Mammary epithelial cell (primary cell): ENCODE measurements at regions of chr7 and their contacts with region 1.

Region 1: DNA sequence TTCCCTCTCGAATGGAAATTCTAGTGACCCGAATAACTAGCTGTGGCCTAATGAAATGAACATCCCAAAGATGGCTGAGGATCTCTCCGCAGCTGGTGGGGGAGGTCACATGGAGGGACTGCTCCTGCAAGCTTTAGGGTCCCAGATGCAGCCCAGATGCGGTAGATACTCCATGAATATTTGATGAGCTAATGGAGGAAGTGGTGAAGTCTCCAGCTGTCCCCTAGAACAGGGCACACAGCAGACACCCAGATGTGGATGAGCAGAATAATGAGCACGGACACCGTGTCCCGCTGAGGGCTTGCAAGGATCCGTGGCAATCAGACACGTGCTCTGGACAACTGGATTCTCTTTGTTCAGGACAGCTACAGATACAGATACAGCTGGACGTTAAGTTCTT is 59.2 kb downstream of the DENND2A start:
- DNase-seq: no peak
- H3K4me3 ChIP-seq: no peak overlapping the region
- H3K27ac ChIP-seq: no peak overlapping the region
- H3K4me1 ChIP-seq: no peaks in the 10 kb centered on the region
- H3K27me3 ChIP-seq: peaks cover 3% of the 10 kb centered on the region
- CTCF ChIP-seq: no peak

Region 2: GRCh38 chr7:140551355-140552239 is 29.8 kb before region 1 on chr7:
- CTCF ChIA-PET with region 1: no interaction called
- dilution Hi-C with region 1: no loop called
- in situ Hi-C with region 1: no loop called
- intact Hi-C with region 1: no loop called
- DNase-seq: no peak
- H3K4me3 ChIP-seq: no peak overlapping the region
- H3K27ac ChIP-seq: no peak overlapping the region
- H3K4me1 ChIP-seq: no peaks in the 10 kb centered on the region
- H3K27me3 ChIP-seq: no peaks in the 10 kb centered on the region
- CTCF ChIP-seq: no peak

Region 3: DNA sequence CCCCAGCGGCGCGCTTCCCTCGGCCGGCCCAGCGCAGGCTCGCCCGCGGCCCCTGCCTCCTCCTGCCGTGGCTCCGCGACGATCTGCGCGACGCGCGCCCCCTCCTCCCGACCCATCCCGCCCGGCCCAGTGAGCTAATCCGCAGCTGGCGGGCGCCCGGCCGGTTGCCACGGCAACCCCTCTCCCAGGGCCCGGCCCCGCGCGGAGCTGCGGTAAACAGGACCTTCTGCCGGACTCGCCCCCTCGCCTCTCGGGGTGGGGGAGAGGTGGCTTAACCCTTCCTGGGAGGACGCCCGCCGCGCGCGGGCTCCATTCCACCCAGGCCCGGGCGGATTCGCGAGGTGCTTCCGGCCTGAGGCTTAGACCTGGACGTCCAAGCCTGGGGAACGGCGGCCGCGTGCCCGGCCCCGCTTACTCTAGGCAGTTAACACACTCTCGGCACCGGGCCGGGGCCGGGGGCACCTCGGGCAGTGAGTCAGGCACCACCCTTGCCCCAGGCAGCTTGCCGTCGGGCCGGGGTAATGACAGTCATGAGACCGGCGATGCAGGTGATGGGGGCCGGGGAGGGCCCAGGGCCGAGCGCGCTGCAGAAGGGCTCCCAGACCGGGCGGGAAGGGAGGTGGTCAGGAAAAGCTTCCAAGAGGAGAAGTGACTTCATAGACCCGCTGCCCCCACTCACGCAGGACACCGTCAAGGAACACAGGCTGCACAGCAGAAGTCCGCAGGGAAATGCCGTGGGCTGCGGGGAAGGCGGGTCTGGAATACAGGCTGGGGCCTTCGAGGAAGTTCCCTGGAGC is 59.5 kb after region 1 on chr7 and contains the start of gene DENND2A:
- CTCF ChIA-PET with region 1: no interaction called
- dilution Hi-C with region 1: loop called (anchors 5 kb)
- in situ Hi-C with region 1: no loop called
- intact Hi-C with region 1: no loop called
- DNase-seq: no peak
- H3K4me3 ChIP-seq: peak within 1 kb of the TSS; percentile 13 to 49 (median 35)
- H3K27ac ChIP-seq: no peak within 1 kb of the TSS
- H3K4me1 ChIP-seq: peaks cover 4% of the 10 kb centered on the region
- H3K27me3 ChIP-seq: peaks cover 12% of the 10 kb centered on the region
- CTCF ChIP-seq: no peak
- total RNA-seq, gene DENND2A: 0.17 to 1.6 TPM